Tibial artery (tissue), 4 donors: ENCODE measurements at regions of chr12 and their contacts with region 1.

Region 1: GRCh38 chr12:71415336-71416231 is 24.0 kb upstream of the LGR5 start:
- DNase-seq: no peak
- H3K4me3 ChIP-seq: no peak overlapping the region
- H3K27ac ChIP-seq: no peak overlapping the region
- H3K4me1 ChIP-seq: peaks cover 0 to 5% (median 0%) of the 10 kb centered on the region in 4 donors
- H3K27me3 ChIP-seq: no peaks in the 10 kb centered on the region
- CTCF ChIP-seq: peak; percentile 74 to 75

Region 2: GRCh38 chr12:71551529-71551928 is 135.9 kb after region 1 on chr12:
- intact Hi-C with region 1: loop called (anchors 5 kb)
- DNase-seq: no peak
- H3K4me3 ChIP-seq: no peak overlapping the region
- H3K27ac ChIP-seq: no peak overlapping the region
- H3K4me1 ChIP-seq: no peaks in the 10 kb centered on the region
- H3K27me3 ChIP-seq: no peaks in the 10 kb centered on the region
- CTCF ChIP-seq: peak in 1 of 2 experiments; percentile 26

Region 3: GRCh38 chr12:71746983-71747611 is 331.5 kb after region 1 on chr12:
- intact Hi-C with region 1: loop called (anchors 5 kb)
- DNase-seq: no peak
- H3K4me3 ChIP-seq: no peak overlapping the region
- H3K27ac ChIP-seq: no peak overlapping the region
- H3K4me1 ChIP-seq: no peaks in the 10 kb centered on the region
- H3K27me3 ChIP-seq: no peaks in the 10 kb centered on the region
- CTCF ChIP-seq: peak; percentile 69 to 71